ENCODE measurements at regions of chr1 and their contacts with region 1.

Region 1: DNA sequence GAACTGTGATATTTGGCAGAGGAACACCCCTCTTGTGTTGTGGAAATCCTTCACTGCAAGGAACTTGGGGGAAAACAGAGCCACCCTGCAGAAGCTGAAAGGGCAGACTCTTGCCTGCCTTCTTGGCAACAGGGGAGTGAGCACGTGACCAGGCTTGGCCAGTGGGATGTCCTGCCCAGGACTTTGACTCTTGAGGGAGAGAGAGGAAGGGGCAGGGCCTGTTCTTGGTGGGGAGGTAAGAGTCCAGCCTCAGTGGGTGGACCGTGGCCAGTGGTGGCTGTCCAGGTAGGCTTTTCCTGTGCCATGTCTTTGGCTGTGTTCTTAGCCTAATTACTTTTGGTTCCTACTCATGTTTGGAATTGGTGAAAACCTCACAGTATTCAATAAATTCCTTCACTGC is 8.6 kb upstream of the AK2 start:
- DNase-seq: no peak
- H3K4me3 ChIP-seq: no peak overlapping the region
- H3K27ac ChIP-seq: no peak overlapping the region
- H3K4me1 ChIP-seq: peaks cover 28% of the 10 kb centered on the region
- H3K27me3 ChIP-seq: no peaks in the 10 kb centered on the region
- CTCF ChIP-seq: no peak

Region 2: DNA sequence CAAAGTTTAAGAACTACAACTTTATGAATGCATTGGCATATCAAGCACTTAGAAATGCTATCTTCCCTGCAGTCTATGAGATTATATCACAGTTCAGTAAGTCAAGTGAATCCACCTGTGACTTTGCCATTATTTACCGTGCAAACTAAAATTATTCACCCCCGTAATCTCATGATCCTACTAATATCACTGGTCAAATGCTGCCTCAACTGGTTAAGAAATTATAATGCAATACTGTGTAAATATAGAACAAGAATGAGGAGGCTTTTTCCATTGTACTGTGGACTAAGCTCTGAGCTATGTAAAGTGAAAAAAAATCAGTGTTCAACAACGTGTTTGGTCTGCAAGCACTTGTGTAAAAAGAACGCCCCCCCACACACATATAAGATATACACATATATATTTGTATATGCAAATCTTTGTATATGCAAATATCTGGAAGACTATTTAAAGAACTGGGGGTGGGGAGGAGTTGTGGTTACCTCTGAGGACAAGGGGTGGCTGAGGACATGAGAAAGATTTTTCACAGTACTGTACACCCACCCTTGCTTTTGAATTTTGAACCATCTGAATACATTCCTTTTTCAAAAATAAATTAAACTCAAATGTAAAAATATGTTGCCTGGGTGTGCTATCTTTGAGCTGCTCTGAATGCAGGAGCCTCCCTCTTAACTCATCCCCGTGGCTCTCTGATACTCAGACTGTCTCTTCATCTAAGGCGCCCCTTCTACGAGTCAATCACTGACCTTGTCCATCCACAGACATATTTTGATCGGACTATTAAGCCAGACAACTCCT is 1164.2 kb before region 1 on chr1:
- CTCF ChIA-PET with region 1: interaction called, 14 read pairs
- POLR2A ChIA-PET with region 1: no interaction called
- intact Hi-C with region 1: no loop called
- DNase-seq: no peak
- H3K4me3 ChIP-seq: no peak overlapping the region
- H3K27ac ChIP-seq: no peak overlapping the region
- H3K4me1 ChIP-seq: no peaks in the 10 kb centered on the region
- H3K27me3 ChIP-seq: no peaks in the 10 kb centered on the region
- CTCF ChIP-seq: no peak

Region 3: DNA sequence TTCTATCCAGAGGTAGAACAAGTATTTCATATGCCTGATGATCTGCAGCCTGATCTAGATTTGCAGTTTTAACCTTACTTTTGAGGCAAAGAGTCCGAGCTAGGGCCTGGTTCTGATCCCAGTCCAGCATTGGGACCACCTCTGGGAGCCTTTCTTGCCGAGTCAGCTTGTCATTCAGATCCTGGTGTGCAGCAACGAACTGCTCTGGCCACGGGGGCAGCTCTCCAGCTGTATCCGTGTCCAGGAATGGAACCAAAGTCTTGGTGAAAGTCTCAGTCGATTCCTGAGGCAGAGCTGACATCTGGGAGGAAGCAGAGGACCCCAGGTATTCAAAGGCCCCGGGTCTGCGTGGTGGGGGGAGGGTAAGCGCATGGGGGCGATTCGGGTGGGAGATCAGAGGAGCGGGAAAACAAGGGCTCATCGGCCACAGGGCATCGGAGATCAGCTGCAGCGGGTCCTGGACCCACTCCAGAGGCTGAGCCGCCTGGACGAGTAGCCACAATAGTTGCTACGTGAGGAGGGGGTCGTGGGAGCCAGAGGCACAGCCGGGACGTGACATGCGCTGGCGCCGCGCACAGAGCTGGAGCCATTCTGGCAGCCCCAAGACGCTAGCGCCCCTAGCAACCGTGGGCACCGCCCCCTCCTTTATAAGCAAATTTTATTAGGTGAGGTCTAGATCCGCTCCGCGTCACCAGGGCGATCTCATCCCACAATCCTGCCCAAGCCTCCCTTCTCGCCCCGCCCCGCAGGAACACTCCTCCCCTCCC is 618.6 kb before region 1 on chr1:
- CTCF ChIA-PET with region 1: no interaction called
- POLR2A ChIA-PET with region 1: interaction called, 21 read pairs
- intact Hi-C with region 1: no loop called
- DNase-seq: peak in 1 of 2 experiments; percentile 2
- H3K4me3 ChIP-seq: no peak overlapping the region
- H3K27ac ChIP-seq: no peak overlapping the region
- H3K4me1 ChIP-seq: no peaks in the 10 kb centered on the region
- H3K27me3 ChIP-seq: peaks cover 65% of the 10 kb centered on the region
- CTCF ChIP-seq: no peak

Measured in PC-9 (cell line).